Heart right ventricle (tissue), 16 donors: ENCODE measurements at regions of chr19 and their contacts with region 1.

Region 1: DNA sequence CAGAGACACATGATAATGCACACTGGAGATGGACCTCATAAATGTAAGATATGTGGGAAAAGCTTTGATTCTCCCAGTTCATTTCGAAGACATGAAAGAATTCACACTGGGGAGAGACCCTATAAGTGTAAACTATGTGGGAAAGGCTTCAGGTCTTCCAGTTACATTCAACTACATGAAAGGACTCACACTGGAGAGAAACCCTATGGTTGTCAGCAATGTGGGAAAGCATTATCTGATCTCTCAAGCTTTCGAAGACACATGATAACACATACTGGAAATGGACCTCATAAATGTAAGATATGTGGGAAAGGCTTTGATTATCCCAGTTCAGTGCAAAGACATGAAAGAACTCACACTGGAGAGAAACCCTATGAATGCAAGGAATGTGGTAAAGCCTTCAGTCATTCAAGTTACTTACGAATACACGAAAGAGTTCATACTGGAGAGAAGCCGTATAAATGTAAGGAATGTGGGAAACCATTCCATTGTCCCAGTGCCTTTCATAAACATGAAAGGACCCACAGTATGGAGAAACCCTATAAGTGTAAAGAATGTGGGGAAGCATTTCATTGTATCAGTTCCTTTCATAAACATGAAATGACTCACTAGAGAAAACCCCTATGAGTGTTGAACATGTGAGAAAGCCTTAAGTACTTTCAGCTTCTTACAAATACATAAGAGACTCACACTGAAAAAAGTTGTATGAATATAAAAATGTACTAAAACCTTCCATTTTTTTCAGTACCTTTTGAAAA is 14.7 kb downstream of the ZNF441 start:
- DNase-seq: no peak
- ATAC-seq: no peak
- H3K4me3 ChIP-seq: no peak overlapping the region
- H3K27ac ChIP-seq: no peak overlapping the region
- H3K4me1 ChIP-seq: no peaks in the 10 kb centered on the region
- H3K27me3 ChIP-seq: no peaks in the 10 kb centered on the region
- CTCF ChIP-seq: no peak

Region 2: DNA sequence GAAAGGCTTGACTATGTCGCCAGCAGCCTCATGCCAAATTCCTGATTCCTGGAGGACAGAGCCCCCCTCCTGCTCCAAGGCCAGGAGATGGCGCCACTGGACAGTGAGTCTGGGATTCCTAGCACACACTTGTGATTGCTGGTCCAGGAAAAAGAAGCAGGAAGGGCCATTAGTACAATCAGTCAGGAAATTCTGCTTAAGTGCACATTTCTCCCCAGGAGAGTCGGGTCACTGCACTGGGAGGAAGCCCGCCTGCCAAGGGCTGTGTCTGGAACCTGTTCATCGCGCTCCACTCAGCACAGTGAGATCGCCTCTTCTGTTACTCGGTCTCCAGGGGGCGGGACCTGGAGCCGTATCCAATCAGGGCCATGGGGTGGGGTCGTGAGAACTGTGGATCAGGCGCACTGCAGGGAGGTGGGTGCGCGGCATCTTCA is 107.8 kb before region 1 on chr19:
- intact Hi-C with region 1: loop called in 4 of 10 experiments (anchors 2 to 10 kb)
- DNase-seq: peak; percentile 73 to 83
- ATAC-seq: peak; percentile 84 to 97 (median 94)
- H3K4me3 ChIP-seq: peak overlapping the region; percentile 36 to 73 (median 59)
- H3K27ac ChIP-seq: peak overlapping the region in 7 of 10 donors; percentile 2 to 54 (median 30)
- H3K4me1 ChIP-seq: peaks cover 0 to 14% (median 8%) of the 10 kb centered on the region in 9 donors
- H3K27me3 ChIP-seq: peaks cover 0 to 19% (median 0%) of the 10 kb centered on the region in 7 donors
- CTCF ChIP-seq: peak; percentile 56 to 94 (median 81)

Region 3: DNA sequence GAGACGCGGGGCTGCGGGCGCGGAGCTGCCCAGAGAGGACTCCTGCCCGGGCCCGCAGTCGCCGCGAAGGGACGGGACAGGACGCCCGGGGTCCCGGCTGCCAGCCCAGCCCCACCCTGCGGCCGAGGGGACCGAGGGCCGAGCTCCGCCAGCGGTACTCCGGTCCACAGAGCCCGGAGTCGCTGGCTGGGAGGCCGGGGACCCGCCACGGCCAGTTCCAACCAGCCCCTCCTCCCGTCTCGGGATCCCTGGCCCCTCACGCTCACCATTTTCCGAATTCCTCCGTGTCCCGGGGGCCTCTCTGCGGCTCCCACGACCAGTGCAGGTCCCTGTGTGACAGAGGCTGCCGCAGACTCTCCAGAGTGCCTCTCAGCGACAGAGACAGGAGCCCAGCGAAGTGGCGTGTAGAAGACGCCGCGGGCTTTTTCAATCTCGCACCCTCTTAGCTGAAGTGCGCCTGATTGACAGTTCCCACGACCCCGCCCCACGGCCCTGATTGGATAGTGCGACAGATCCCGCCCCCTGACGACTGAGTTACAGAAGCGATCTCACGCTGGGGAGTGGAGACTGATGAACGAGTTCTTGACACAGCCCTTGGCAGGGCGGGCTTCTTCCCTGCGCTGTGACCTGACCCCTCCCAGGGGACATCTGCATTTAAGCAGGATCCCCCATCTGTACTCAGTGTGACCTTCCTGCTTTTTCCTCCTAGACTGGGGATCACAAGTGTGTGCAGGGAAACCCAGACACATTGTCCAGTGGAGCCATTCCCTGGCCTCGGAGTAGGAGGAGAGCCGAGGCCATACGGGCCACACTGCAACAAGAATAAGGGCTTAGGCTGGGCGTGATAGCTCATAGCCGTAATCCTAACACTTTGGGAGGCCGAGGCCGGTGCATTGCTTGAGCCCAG is 86.7 kb before region 1 on chr19:
- intact Hi-C with region 1: loop called in 1 of 10 experiments (anchors 10 kb)
- DNase-seq: peak; percentile 96 to 97
- ATAC-seq: peak; percentile 99 to 100 (median 100)
- H3K4me3 ChIP-seq: peak overlapping the region; percentile 66 to 93 (median 77)
- H3K27ac ChIP-seq: peak overlapping the region in 9 of 10 donors; percentile 32 to 68 (median 54)
- H3K4me1 ChIP-seq: peaks cover 0 to 17% (median 10%) of the 10 kb centered on the region in 9 donors
- H3K27me3 ChIP-seq: no peaks in the 10 kb centered on the region
- CTCF ChIP-seq: no peak

Region 4: DNA sequence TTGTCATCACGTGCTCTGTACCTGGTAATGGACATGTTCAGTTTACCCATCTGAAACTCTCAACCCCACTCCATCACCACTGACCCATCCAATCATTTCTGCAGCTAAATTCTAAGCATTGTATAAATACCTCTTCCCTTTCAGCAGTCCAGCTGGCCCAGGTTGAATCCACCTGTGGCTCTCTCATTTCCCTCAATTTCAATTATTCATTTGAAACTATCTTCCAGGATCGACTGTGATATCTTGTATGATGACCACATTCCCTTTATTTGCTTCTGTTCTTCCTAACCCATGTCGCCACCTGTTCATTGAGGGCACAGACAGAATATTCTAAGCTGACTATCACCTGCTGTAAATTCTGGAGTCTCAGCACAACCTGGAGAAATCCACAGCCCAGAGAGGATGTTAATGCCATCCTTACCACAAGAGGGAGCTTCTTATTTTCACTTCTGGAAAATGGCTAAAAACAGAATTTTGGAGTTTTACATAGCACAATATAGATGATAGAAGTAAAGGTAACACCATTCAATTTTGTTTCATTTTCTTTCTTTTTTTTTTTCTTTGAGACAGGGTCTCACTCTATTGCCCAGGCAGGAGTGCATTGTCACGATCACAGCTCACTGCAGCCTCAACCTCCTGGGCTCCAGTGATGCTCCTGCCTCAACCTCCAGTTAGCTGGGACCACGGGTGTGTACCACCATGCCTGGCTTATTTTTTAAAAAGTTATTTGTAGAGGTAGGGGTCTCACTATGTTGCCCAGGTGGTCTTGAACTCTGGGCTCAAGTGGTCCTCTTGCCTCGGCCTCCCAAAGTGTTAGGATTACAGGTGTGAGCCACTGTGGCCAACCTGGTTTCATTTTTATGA is 81.3 kb before region 1 on chr19:
- intact Hi-C with region 1: loop called in 2 of 10 experiments (anchors 5 to 10 kb)
- DNase-seq: no peak
- ATAC-seq: peak in 1 of 8 donors; percentile 44
- H3K4me3 ChIP-seq: no peak overlapping the region
- H3K27ac ChIP-seq: no peak overlapping the region
- H3K4me1 ChIP-seq: peaks cover 0 to 3% (median 1%) of the 10 kb centered on the region in 9 donors
- H3K27me3 ChIP-seq: no peaks in the 10 kb centered on the region
- CTCF ChIP-seq: peak; percentile 33 to 79 (median 65)

Region 5: GRCh38 chr19:11722414-11722813 is 59.1 kb before region 1 on chr19:
- intact Hi-C with region 1: no loop called
- DNase-seq: no peak
- ATAC-seq: no peak
- H3K4me3 ChIP-seq: no peak overlapping the region
- H3K27ac ChIP-seq: no peak overlapping the region
- H3K4me1 ChIP-seq: no peaks in the 10 kb centered on the region
- H3K27me3 ChIP-seq: no peaks in the 10 kb centered on the region
- CTCF ChIP-seq: no peak